WTC11 (cell line): ENCODE measurements at regions of chr6 and their contacts with region 1.

Region 1: DNA sequence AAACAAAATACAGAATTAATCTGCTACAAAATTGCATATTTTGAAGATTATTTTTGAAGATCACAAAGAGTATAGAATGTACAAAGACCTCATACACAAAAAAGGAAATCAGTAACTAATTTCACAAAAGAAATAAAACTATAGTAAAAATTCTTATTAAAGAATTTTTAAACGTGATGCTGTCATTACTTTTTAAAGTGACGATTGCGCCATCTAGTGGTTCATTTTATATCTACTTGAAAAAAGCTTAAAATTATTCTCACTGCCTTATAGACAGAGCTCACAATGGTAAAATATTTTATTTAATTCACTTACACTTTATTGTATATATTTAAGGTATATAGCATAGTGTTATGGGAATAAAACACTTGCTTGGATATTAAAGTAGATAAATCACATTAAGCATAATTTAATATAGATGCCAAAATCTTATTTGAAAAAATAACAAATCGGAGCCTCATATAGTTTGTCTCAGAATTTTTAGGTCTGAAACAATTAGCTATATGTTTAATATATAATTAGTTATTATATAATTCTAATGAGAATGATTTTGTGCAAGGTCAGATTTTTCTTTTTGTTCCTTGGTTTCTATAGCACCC is 128.8 kb downstream of the PHF3 start:
- DNase-seq: no peak
- ATAC-seq: no peak
- H3K4me3 Mint-ChIP-seq: no peak overlapping the region
- H3K27ac Mint-ChIP-seq: no peak overlapping the region
- H3K4me1 Mint-ChIP-seq: peaks cover 3% of the 10 kb centered on the region
- H3K27me3 Mint-ChIP-seq: peaks cover 9% of the 10 kb centered on the region; the same call in 1 of the 2 replicates
- CTCF ChIP-seq: peak; percentile 43

Region 2: GRCh38 chr6:63352587-63353285 is 411.7 kb before region 1 on chr6:
- CTCF ChIA-PET with region 1: interaction called, 14 read pairs
- POLR2A ChIA-PET with region 1: no interaction called
- DNase-seq: no peak
- ATAC-seq: peak; percentile 73
- H3K4me3 Mint-ChIP-seq: no peak overlapping the region
- H3K27ac Mint-ChIP-seq: no peak overlapping the region
- H3K4me1 Mint-ChIP-seq: peaks cover 5% of the 10 kb centered on the region; the same call in 1 of the 2 replicates
- H3K27me3 Mint-ChIP-seq: no peaks in the 10 kb centered on the region
- CTCF ChIP-seq: 0 out of 2 replicates have a peak, but pooled peaks have one; percentile 24